Dorsolateral prefrontal cortex (tissue), 120 donors: ENCODE measurements at regions of chr3 and their contacts with region 1.

Region 1: GRCh38 chr3:51498876-51499738 is 708 bp downstream of the DCAF1 start:
- DNase-seq: peak; percentile 57 to 89 (median 82)
- H3K4me3 ChIP-seq: peak overlapping the region; percentile 65 to 97 (median 87)
- H3K27ac ChIP-seq: peak overlapping the region; percentile 52 to 97 (median 90)
- H3K27me3 ChIP-seq: no peaks in the 10 kb centered on the region
- CTCF ChIP-seq: peak in 3 of 56 donors; percentile 7 to 16 (median 13)

Region 2: DNA sequence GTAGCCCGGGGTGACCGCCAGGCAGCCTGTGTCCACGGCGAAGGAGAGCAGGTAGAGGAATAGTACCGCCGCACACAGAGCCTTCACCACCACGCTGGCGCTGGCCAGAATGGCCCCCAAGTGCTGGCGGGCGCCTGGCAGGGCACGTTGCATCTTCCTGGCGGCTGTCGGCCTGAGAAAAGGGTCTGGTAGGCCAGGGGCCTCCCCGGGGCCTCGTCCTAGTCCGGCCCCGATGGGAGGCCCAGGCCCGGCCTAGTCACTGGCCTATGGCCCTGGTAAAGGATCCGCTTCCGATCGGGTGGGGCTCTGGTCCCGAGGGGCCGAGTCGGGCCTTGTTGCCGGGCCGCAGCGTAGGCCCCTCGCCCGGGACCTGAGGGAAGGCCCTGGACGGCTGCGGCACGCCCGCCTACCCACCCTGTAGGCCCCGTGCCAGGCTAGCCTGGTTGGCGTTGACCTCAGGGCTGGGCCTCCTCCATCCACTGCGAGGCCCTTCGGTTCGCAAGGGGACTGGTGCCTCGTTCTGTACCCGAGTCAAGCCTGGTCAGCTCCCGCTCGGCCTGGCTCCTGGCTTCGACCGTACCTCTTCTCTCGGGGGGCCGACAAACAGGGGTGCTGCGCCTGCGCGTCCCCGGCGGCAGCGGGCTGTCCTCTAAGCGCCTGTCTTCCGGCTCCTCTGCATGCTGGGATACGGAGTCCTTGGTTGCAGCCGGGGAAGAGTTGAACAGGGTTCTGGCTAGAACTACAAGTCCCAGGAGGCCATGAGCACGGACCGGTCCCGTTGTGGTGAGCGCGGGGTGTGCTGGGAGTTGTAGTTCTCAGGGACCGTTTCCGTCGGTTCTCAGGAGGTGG is 1140.0 kb before region 1 on chr3 and contains the start of gene TMEM115:
- intact Hi-C with region 1: loop called (anchors 10 kb)
- DNase-seq: peak; percentile 97 to 100 (median 99)
- H3K4me3 ChIP-seq: peak within 1 kb of the TSS; percentile 62 to 100 (median 96)
- H3K27ac ChIP-seq: peak within 1 kb of the TSS; percentile 40 to 98 (median 88)
- H3K27me3 ChIP-seq: no peaks in the 10 kb centered on the region
- CTCF ChIP-seq: peak in 28 of 56 donors; percentile 6 to 54 (median 25)
- total RNA-seq, gene TMEM115: 19.2 to 33.5 (median 26.4) TPM

Region 3: DNA sequence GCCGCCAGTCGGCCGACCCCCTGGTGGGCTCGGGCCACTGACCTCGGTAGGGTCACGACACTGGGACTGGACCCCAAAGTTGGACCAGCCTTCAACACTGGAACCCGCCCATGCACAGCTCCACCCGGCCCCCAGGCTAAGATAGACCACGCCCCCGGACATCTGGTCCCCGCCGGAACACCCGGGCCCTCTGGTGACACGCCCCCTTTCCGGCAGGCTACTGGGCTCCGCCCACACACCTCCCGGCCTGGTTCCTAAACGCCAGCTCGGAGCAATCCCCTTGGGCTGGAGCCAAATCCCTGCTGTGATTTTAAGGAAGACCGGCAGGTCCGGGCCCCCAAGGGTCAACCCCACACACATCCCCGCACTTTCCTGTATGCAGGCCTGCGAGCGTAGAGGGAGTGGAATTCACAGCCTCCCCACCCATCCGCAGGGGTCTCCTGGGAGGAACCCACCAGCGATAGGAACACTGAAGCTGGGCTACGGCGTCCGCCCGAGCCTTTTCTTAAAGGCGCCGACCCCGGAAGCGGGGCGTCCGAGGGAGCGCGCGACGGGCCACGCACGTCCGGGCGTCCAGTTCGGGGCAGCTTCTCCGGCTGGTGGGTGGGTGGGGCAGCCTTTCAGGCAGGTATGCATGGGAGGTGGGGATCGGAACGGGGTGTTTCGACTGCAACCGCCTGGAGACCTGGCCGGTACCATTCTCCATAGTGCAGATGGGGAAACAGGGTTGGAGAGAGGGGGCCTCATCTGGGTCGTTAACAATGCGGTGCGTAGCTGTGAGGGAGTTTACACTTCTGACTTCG is 930.0 kb before region 1 on chr3 and contains the start of gene HEMK1:
- intact Hi-C with region 1: loop called in 1 of 2 experiments (anchors 5 kb)
- DNase-seq: peak; percentile 88 to 98 (median 95)
- H3K4me3 ChIP-seq: peak within 1 kb of the TSS; percentile 65 to 98 (median 89)
- H3K27ac ChIP-seq: peak within 1 kb of the TSS in 58 of 59 donors; percentile 6 to 96 (median 88)
- H3K27me3 ChIP-seq: no peaks in the 10 kb centered on the region
- CTCF ChIP-seq: peak in 26 of 56 donors; percentile 2 to 53 (median 18)
- total RNA-seq, gene HEMK1: 8.6 to 22.8 (median 14.2) TPM

Region 4: DNA sequence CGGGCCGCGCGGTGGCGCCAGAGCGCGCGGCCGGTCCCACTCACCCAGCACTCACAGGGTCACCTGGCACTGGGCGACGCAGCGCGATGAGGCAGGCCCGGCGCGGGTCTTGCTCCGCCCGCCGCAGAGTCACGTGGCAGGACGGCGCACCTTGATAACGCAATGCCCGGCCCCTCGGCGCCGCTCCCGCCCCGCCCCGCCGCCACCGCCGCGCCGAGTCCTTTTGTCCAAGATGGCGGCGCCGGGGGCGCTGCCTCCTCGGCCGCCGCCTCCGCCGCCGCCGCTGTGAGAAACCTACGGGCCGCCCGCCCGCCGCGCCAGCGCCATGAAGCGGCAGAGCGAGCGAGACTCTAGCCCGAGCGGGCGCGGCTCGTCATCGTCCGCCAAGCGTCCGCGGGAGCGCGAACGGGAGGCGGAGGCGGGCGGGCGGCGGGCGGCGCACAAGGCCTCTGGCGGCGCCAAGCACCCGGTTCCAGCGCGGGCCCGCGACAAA is 108.0 kb before region 1 on chr3 and contains the start of gene RBM15B:
- intact Hi-C with region 1: loop called (anchors 1 to 2 kb)
- DNase-seq: peak; percentile 93 to 99 (median 97)
- H3K4me3 ChIP-seq: peak within 1 kb of the TSS; percentile 56 to 88 (median 74)
- H3K27ac ChIP-seq: peak within 1 kb of the TSS; percentile 39 to 96 (median 83)
- H3K27me3 ChIP-seq: no peaks in the 10 kb centered on the region
- CTCF ChIP-seq: peak in 48 of 56 donors; percentile 1 to 99 (median 96)
- total RNA-seq, gene RBM15B: 15.0 to 22.9 (median 19.1) TPM

Region 5: GRCh38 chr3:51538459-51539290 is 39.6 kb after region 1 on chr3 and contains the start of gene RAD54L2:
- intact Hi-C with region 1: loop called (anchors 1 to 5 kb)
- DNase-seq: peak; percentile 60 to 90 (median 82)
- H3K4me3 ChIP-seq: peak within 1 kb of the TSS; percentile 68 to 98 (median 92)
- H3K27ac ChIP-seq: peak within 1 kb of the TSS; percentile 60 to 95 (median 89)
- H3K27me3 ChIP-seq: no peaks in the 10 kb centered on the region
- CTCF ChIP-seq: peak in 55 of 56 donors; percentile 12 to 81 (median 50)
- total RNA-seq, gene RAD54L2: 23.8 to 45.2 (median 32.4) TPM

Region 6: DNA sequence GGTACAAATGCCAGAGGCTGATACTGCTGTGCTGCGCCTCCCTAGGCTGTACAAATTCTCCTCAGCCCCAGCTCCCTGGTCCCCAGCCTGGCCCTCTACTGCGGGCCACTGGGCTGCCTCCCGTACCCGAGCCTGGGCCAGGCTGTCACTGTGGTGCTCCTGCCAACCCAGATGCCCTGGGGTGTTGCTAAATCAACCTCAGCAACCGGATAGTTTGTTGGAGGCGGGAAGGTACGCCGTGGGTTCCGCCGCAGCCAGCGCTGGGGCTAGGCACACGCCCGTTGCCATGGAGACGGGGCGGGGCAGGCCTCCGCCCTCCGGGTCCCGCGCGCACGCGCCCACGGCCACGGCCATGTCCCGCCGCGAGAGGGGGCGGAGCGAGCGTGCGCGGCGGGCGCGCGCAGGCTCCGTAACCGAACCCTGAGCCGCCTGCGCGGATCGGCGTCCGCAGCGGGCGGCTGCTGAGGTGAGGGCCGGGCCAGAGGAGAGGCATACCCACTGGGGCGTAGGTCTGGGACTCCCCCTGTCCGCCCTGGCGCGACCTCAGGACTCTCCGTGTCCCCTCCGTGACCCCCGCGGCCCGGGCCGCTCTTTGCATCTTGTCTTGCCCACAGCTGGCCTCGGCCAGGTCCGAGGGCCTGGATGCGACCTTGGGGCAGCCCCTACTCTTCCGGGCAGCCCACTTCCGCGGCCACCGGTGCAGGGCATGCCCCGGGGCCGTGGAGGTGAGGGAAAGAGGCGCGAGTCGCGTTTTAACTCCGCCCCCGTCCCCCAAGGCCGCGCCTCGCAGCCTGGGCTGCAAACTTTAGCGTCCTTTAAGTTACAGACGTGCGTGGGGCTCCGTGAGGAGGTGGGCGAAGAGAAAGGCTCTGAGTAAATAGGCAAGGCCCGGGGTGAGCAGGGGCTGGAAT is 172.0 kb after region 1 on chr3 and contains the start of gene TEX264:
- intact Hi-C with region 1: loop called (anchors 1 kb)
- DNase-seq: peak; percentile 71 to 92 (median 84)
- H3K4me3 ChIP-seq: peak within 1 kb of the TSS; percentile 77 to 100 (median 93)
- H3K27ac ChIP-seq: peak within 1 kb of the TSS; percentile 23 to 95 (median 86)
- H3K27me3 ChIP-seq: no peaks in the 10 kb centered on the region
- CTCF ChIP-seq: peak in 26 of 56 donors; percentile 3 to 58 (median 32)
- total RNA-seq, gene TEX264: 26.0 to 48.6 (median 36.4) TPM

Region 7: GRCh38 chr3:51799879-51800749 is 301.0 kb after region 1 on chr3:
- intact Hi-C with region 1: loop called in 1 of 2 experiments (anchors 2 kb)
- DNase-seq: no peak
- H3K4me3 ChIP-seq: peak overlapping the region in 2 of 59 donors; percentile 10 to 16
- H3K27ac ChIP-seq: peak overlapping the region in 1 of 59 donors; percentile 15
- H3K27me3 ChIP-seq: peaks cover 0 to 23% (median 0%) of the 10 kb centered on the region in 45 donors
- CTCF ChIP-seq: peak; percentile 60 to 92 (median 79)